Right cardiac atrium (tissue), 5 donors: ENCODE measurements at regions of chr4 and their contacts with region 1.

Region 1: DNA sequence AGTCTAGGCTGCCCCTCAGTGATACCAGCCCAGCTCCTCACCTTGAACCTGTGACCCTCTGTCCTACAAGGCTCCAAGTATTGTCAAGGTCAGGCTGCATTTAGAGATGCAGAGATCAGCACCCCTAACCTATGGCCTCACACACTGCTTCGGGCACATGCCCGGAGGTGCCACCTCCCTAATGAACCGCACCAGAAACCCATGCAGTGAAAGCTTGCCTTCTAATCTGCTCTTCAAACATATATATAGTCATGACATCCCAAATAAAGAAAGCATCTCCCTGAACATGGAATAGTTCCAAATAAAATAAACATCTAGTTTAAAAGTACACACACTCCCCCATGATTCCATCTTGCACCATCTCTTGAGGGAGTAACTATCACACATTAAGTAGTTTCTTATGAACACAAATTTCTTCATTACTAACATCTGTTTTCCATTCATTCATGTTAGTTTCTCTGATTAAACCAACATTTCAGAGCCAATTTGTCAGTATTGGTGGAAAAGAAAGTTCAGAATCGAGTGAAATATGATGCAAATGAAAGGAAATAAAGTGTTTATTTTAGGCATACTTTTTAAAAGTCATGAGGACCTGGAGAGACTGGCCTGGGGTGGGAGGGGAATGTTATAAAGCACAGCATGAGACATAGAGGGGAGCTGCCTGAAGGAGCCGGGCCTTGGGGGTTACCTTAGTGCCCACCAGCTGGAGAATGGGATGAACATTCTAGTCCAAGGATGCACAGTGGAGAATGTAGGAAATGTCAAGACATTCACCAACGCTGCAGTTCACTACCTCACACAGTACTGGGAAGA is 19.2 kb downstream of the CC2D2A start:
- DNase-seq: no peak
- ATAC-seq: peak; percentile 59 to 63
- H3K4me3 ChIP-seq: no peak overlapping the region
- H3K27ac ChIP-seq: peak overlapping the region; percentile 59
- H3K4me1 ChIP-seq: no peaks in the 10 kb centered on the region
- H3K27me3 ChIP-seq: no peaks in the 10 kb centered on the region

Region 2: DNA sequence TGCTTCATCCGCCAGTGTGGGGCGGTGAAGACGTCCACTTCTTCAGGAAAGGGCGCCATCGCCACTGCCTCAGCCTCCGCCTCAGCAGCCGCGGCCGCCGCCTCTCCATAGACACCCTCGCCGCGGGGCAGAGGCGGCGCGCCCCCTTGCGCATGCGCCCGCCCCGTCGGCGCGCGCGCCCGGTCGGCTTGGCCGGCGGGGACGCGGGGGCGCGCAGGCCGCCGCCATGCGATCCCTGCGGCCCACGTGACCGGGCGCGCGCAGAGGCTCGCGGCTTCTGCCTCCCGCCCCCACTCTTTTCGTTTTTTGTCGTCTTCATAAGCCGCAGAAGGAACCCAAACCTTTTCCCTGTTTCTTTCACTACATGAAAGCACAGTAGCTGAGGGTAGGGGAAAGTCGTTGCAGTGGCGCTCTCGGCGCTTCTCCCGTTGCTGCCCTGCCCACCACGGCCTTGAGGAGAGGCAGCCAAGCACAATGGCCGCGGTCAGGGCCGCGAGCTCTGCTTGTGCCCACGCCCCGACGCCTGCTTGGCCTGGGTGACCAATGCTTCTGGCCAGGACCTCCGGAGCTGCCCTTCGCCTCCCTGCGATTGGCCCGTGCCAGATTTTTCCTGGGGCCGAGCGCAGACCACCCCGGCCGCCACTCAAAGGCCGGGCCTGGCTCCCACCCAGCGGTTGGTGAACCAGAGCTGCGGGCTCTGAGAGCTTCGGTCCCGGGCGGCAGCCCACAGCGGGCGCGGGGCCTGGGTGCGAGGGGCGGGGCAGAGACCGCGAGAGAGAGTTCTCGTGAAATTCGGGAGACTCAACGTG is 166.6 kb after region 1 on chr4 and contains the start of gene FBXL5:
- intact Hi-C with region 1: loop called in 1 of 4 experiments (anchors 10 kb)
- DNase-seq: peak; percentile 81 to 94 (median 93)
- ATAC-seq: peak; percentile 85 to 93
- H3K4me3 ChIP-seq: peak within 1 kb of the TSS; percentile 97
- H3K27ac ChIP-seq: peak within 1 kb of the TSS; percentile 95
- H3K4me1 ChIP-seq: no peaks in the 10 kb centered on the region
- H3K27me3 ChIP-seq: no peaks in the 10 kb centered on the region
- total RNA-seq, gene FBXL5: 80.8 to 90.1 (median 88.3) TPM